ENCODE measurements at regions of chr3 and their contacts with region 1.

Region 1: GRCh38 chr3:55804170-55805095 is 317.3 kb upstream of the WNT5A start:
- DNase-seq: no peak
- H3K4me3 ChIP-seq: no peak overlapping the region
- H3K4me3 Mint-ChIP-seq: no peak overlapping the region
- H3K27ac Mint-ChIP-seq: no peak overlapping the region
- H3K4me1 ChIP-seq: no peaks in the 10 kb centered on the region
- H3K4me1 Mint-ChIP-seq: no peaks in the 10 kb centered on the region
- H3K27me3 ChIP-seq: no peaks in the 10 kb centered on the region
- H3K27me3 Mint-ChIP-seq: peaks cover 4% of the 10 kb centered on the region
- CTCF ChIP-seq: no peak

Region 2: GRCh38 chr3:55823001-55823400 is 18.6 kb after region 1 on chr3:
- CTCF ChIA-PET with region 1: no interaction called
- POLR2A ChIA-PET with region 1: no interaction called
- intact Hi-C with region 1: loop called (anchors 1 kb)
- DNase-seq: no peak
- H3K4me3 ChIP-seq: no peak overlapping the region
- H3K4me3 Mint-ChIP-seq: no peak overlapping the region
- H3K27ac Mint-ChIP-seq: no peak overlapping the region
- H3K4me1 ChIP-seq: no peaks in the 10 kb centered on the region
- H3K4me1 Mint-ChIP-seq: no peaks in the 10 kb centered on the region
- H3K27me3 ChIP-seq: no peaks in the 10 kb centered on the region
- H3K27me3 Mint-ChIP-seq: peaks cover 4% of the 10 kb centered on the region
- CTCF ChIP-seq: no peak

Measured in Caco-2 (cell line).